ENCODE measurements at regions of chr11 and their contacts with region 1.

Region 1: DNA sequence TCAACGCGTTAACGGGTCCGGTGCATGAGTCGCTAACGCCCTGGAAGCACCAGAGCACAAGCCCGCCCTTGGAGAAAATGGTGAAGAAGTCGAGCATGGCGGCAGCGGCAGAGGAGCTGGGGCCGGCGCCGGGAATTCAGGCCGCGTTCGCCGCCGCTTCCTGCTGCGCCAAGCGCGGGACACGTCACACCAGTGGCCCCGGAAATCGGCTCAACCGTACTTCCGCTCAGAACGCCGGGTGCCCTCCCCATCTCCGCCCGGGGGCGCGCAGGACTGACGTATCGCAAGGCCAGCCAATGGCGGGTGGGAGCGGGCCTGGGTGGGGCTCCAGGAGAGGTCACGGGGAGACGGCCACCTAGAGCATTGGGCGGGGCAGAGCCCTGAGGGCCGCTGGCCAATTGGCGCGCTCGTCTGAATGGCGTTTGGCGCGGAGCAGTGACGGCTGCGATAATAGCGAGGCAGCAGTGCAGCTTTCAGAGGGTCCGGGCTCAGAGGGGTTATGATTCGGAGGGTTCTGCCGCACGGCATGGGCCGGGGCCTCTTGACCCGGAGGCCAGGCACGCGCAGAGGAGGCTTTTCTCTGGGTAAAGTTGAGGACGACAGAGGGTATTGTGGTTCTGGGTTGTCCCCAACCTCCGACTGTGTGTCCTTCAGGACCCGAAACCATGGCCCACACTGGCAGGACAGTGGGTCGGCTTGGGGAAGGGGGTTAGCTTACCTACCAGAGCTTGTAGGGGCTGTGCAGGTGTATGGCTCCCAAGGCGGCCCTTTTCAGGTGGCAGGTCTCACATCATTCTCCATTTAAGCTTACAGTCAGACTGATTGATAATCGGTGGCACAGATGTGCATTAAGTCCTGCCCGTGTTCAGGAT is at the starts of genes FOXRED1 and SRPRA:
- DNase-seq: peak; percentile 98 to 99
- H3K4me3 ChIP-seq: peak within 1 kb of the TSS; percentile 88 to 99 (median 95)
- H3K27ac ChIP-seq: peak within 1 kb of the TSS; percentile 98
- H3K4me1 ChIP-seq: peaks cover 0 to 7% (median 2%) of the 10 kb centered on the region in 4 experiments; a peak in 1 of 7 replicates
- H3K27me3 ChIP-seq: no peaks in the 10 kb centered on the region
- CTCF ChIP-seq: no peak
- EP300 ChIP-seq: 0 out of 3 replicates have a peak, but pooled peaks of 1 of the 2 experiments have one; percentile 16
- POLR2A ChIP-seq: peak; percentile 86 to 97
- RAD21 ChIP-seq: no peak
- total RNA-seq, gene FOXRED1: 48.5 and 48.8 TPM in 2 replicates
- total RNA-seq, gene SRPRA: 54.3 and 57.6 TPM in 2 replicates

Region 2: GRCh38 chr11:126211235-126212088 is 57.5 kb before region 1 on chr11 and contains the starts of genes FAM118B and RPUSD4:
- CTCF ChIA-PET with region 1: no interaction called
- POLR2A ChIA-PET with region 1: interaction called, 16 read pairs
- DNase-seq: peak; percentile 90 to 99
- H3K4me3 ChIP-seq: peak within 1 kb of the TSS; percentile 79 to 99 (median 94)
- H3K27ac ChIP-seq: peak within 1 kb of the TSS; percentile 82
- H3K4me1 ChIP-seq: peaks cover 0 to 11% (median 3%) of the 10 kb centered on the region in 4 experiments; a peak in 2 of 7 replicates
- H3K27me3 ChIP-seq: no peaks in the 10 kb centered on the region
- CTCF ChIP-seq: no peak
- EP300 ChIP-seq: no peak
- POLR2A ChIP-seq: peak; percentile 86 to 94
- RAD21 ChIP-seq: no peak
- total RNA-seq, gene FAM118B: 47.1 and 48.3 TPM in 2 replicates
- total RNA-seq, gene RPUSD4: 48.2 and 50.7 TPM in 2 replicates

Region 3: DNA sequence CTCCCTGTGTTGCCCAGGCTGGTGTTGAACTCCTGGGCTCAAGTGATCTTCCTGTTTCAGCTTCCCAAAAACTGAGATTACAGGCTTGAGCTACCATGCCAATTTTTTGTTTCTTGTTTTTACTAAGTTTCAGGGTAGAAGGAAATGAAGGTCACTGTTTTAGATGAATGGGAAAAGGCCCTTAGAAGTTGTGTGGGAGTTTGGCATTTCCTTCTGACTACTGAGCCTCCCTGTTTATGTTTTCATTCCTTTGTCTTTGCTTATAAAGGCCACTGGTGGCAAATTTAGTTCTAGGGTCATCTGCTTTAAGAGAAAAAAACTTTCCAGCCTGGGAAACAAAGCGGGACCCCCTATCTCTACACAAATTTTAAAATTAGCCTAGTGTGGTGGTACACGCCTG is 22.3 kb before region 1 on chr11:
- CTCF ChIA-PET with region 1: interaction called, 3 read pairs
- POLR2A ChIA-PET with region 1: interaction called, 43 read pairs
- DNase-seq: no peak
- H3K4me3 ChIP-seq: no peak overlapping the region
- H3K27ac ChIP-seq: no peak overlapping the region
- H3K4me1 ChIP-seq: no peaks in the 10 kb centered on the region
- H3K27me3 ChIP-seq: no peaks in the 10 kb centered on the region
- CTCF ChIP-seq: no peak
- EP300 ChIP-seq: no peak
- POLR2A ChIP-seq: no peak
- RAD21 ChIP-seq: no peak

Region 4: GRCh38 chr11:126282736-126283591 is 14.0 kb after region 1 on chr11 and contains the start of gene TIRAP:
- CTCF ChIA-PET with region 1: interaction called, 3 read pairs
- POLR2A ChIA-PET with region 1: interaction called, 75 read pairs
- DNase-seq: peak in 1 of 2 experiments; percentile 79
- H3K4me3 ChIP-seq: peak within 1 kb of the TSS; percentile 46 to 91 (median 83)
- H3K27ac ChIP-seq: no peak within 1 kb of the TSS
- H3K4me1 ChIP-seq: peaks cover 0 to 6% (median 4%) of the 10 kb centered on the region in 4 experiments; a peak in 4 of 7 replicates
- H3K27me3 ChIP-seq: peaks cover 0 to 5% (median 2%) of the 10 kb centered on the region in 4 experiments; a peak in 4 of 7 replicates
- CTCF ChIP-seq: peak in 1 of 3 experiments; percentile 16; a peak in 1 of 4 replicates
- EP300 ChIP-seq: no peak
- POLR2A ChIP-seq: peak in 1 of 2 experiments; percentile 66; a peak in 2 of 3 replicates
- RAD21 ChIP-seq: no peak
- total RNA-seq, gene TIRAP: 4.5 and 5.3 TPM in 2 replicates

Region 5: GRCh38 chr11:126293726-126294125 is 24.8 kb after region 1 on chr11:
- CTCF ChIA-PET with region 1: no interaction called
- POLR2A ChIA-PET with region 1: interaction called, 14 read pairs
- DNase-seq: no peak
- H3K4me3 ChIP-seq: no peak overlapping the region
- H3K27ac ChIP-seq: no peak overlapping the region
- H3K4me1 ChIP-seq: no peaks in the 10 kb centered on the region
- H3K27me3 ChIP-seq: no peaks in the 10 kb centered on the region
- CTCF ChIP-seq: no peak
- EP300 ChIP-seq: no peak
- POLR2A ChIP-seq: no peak
- RAD21 ChIP-seq: no peak

Region 6: GRCh38 chr11:126303623-126304456 is 34.9 kb after region 1 on chr11 and contains the start of gene DCPS:
- CTCF ChIA-PET with region 1: interaction called, 3 read pairs
- POLR2A ChIA-PET with region 1: interaction called, 11 read pairs
- DNase-seq: peak; percentile 50 to 97
- H3K4me3 ChIP-seq: peak within 1 kb of the TSS; percentile 63 to 98 (median 86)
- H3K27ac ChIP-seq: peak within 1 kb of the TSS; percentile 97
- H3K4me1 ChIP-seq: peaks cover 0 to 5% (median 2%) of the 10 kb centered on the region in 4 experiments; a peak in 4 of 7 replicates
- H3K27me3 ChIP-seq: no peaks in the 10 kb centered on the region
- CTCF ChIP-seq: no peak
- EP300 ChIP-seq: peak in 1 of 2 experiments; percentile 62; a peak in 1 of 3 replicates
- POLR2A ChIP-seq: peak; percentile 93 to 99
- RAD21 ChIP-seq: no peak
- total RNA-seq, gene DCPS: 24.6 and 24.8 TPM in 2 replicates

Measured in H1 (cell line).